CD14-positive monocyte (primary cell): ENCODE measurements at regions of chr1 and their contacts with region 1.

Region 1: GRCh38 chr1:229258031-229258756 is 12.7 kb upstream of the RAB4A start:
- DNase-seq: peak; percentile 50 to 67 (median 61)
- H3K4me3 ChIP-seq: no peak overlapping the region
- H3K4me3 Mint-ChIP-seq: no peak overlapping the region
- H3K27ac ChIP-seq: no peak overlapping the region
- H3K27ac Mint-ChIP-seq: peak overlapping the region in 2 of 7 donors; percentile 25 to 56
- H3K4me1 ChIP-seq: peaks cover 12 to 17% of the 10 kb centered on the region in 2 donors
- H3K4me1 Mint-ChIP-seq: peaks cover 19% of the 10 kb centered on the region
- H3K27me3 ChIP-seq: no peaks in the 10 kb centered on the region
- H3K27me3 Mint-ChIP-seq: peaks cover 2 to 6% (median 3%) of the 10 kb centered on the region in 3 donors
- CTCF ChIP-seq: peak; percentile 85

Region 2: GRCh38 chr1:228664399-228664914 is 593.7 kb before region 1 on chr1:
- intact Hi-C with region 1: loop called in 1 of 2 experiments (anchors 2 kb)
- DNase-seq: peak; percentile 59 to 78 (median 69)
- H3K4me3 ChIP-seq: no peak overlapping the region
- H3K4me3 Mint-ChIP-seq: no peak overlapping the region
- H3K27ac ChIP-seq: no peak overlapping the region
- H3K27ac Mint-ChIP-seq: no peak overlapping the region
- H3K4me1 ChIP-seq: peaks cover 3 to 8% of the 10 kb centered on the region in 2 donors
- H3K4me1 Mint-ChIP-seq: peaks cover 8% of the 10 kb centered on the region
- H3K27me3 ChIP-seq: peaks cover 0 to 2% of the 10 kb centered on the region in 2 donors
- H3K27me3 Mint-ChIP-seq: peaks cover 9 to 15% (median 11%) of the 10 kb centered on the region in 3 donors
- CTCF ChIP-seq: peak; percentile 88

Region 3: GRCh38 chr1:229479660-229480399 is 221.6 kb after region 1 on chr1:
- intact Hi-C with region 1: loop called (anchors 2 to 5 kb)
- DNase-seq: no peak
- H3K4me3 ChIP-seq: no peak overlapping the region
- H3K4me3 Mint-ChIP-seq: no peak overlapping the region
- H3K27ac ChIP-seq: no peak overlapping the region
- H3K27ac Mint-ChIP-seq: peak overlapping the region in 3 of 7 donors; percentile 3 to 41 (median 16)
- H3K4me1 ChIP-seq: no peaks in the 10 kb centered on the region
- H3K4me1 Mint-ChIP-seq: no peaks in the 10 kb centered on the region
- H3K27me3 ChIP-seq: no peaks in the 10 kb centered on the region
- H3K27me3 Mint-ChIP-seq: peaks cover 0 to 3% (median 1%) of the 10 kb centered on the region in 3 donors
- CTCF ChIP-seq: no peak

Region 4: GRCh38 chr1:229514578-229515275 is 256.5 kb after region 1 on chr1:
- intact Hi-C with region 1: loop called (anchors 2 to 5 kb)
- DNase-seq: peak; percentile 57 to 69 (median 64)
- H3K4me3 ChIP-seq: no peak overlapping the region
- H3K4me3 Mint-ChIP-seq: no peak overlapping the region
- H3K27ac ChIP-seq: no peak overlapping the region
- H3K27ac Mint-ChIP-seq: peak overlapping the region in 1 of 7 donors; percentile 50
- H3K4me1 ChIP-seq: peaks cover 0 to 4% of the 10 kb centered on the region in 2 donors
- H3K4me1 Mint-ChIP-seq: peaks cover 5% of the 10 kb centered on the region
- H3K27me3 ChIP-seq: no peaks in the 10 kb centered on the region
- H3K27me3 Mint-ChIP-seq: peaks cover 0 to 3% (median 0%) of the 10 kb centered on the region in 3 donors
- CTCF ChIP-seq: peak; percentile 79